Adrenal gland (tissue), 19 donors: ENCODE measurements at regions of chr1 and their contacts with region 1.

Region 1: DNA sequence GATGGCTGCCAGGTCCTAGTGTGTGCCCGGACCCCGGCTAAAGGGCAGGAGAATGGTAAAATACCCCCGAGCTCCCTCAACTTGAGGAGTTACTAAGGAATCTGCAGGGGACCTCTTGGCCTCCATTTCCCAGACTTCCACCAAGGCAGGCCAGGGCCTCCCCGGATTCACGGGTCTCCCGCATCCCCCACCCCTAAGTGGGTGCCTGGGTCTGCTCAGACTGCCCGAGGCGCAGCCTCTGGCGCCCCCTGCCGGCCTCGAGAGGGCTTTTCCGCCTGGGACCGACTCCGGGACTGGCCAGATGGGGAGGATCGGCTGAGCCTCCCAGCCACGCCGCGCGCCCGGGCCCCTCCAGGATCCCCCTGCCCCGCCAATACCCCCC is 1.7 kb downstream of the PLEKHG5 start:
- DNase-seq: peak; percentile 65 to 84 (median 75)
- H3K4me3 ChIP-seq: peak overlapping the region in 3 of 4 donors; percentile 10 to 86 (median 64)
- H3K27ac ChIP-seq: no peak overlapping the region
- H3K4me1 ChIP-seq: peaks cover 16 to 48% of the 10 kb centered on the region in 2 donors
- H3K27me3 ChIP-seq: no peaks in the 10 kb centered on the region
- CTCF ChIP-seq: peak; percentile 62 to 95 (median 82)
- POLR2A ChIP-seq: no peak

Region 2: DNA sequence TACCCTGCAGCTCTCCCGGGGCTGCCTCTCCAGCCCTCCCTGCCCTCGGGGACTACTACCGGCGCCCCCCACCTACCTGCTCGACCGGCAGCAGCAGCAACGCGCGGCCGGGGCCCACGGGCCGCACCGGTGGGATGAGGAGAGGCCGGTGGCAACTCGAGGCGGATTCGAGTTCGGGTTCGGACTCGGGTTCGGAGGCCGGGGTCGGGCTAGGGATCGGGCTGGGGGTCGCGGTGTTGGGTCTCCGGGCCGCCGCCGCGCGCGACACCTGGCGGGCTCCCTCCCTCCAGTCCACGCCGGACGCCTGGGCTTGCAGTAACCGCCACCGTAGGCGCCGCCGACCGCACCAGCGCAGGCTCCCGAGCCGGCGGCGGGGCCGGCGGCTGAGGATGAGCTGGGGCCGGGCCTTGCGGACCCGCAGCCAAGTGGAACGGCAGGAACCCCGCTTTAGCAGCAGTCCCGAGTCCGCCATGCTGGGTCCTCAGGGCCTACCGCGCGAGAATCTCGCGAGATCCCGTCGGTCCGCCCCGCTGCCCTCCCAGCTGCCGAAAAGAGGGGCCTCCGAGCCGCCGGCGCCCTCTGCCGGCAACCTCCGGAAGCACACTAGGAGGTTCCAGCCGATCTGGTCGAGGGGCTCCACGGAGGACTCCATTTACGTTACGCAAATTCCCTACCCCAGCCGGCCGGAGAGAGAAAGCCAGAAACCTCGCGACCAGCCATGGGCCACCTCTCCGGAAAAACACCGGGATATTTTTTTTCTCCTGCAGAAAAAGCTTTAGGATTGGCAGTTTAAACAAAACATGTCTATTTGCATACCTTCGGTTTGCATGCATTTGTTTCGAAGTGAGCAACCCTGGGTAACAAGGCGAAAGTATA is 64.5 kb after region 1 on chr1 and contains the start of gene NOL9:
- intact Hi-C with region 1: loop called in 1 of 2 experiments (anchors 5 kb)
- DNase-seq: peak; percentile 92 to 96 (median 94)
- H3K4me3 ChIP-seq: peak within 1 kb of the TSS; percentile 10 to 99 (median 78)
- H3K27ac ChIP-seq: peak within 1 kb of the TSS in 4 of 5 donors; percentile 41 to 87 (median 60)
- H3K4me1 ChIP-seq: peaks cover 7 to 22% of the 10 kb centered on the region in 2 donors
- H3K27me3 ChIP-seq: no peaks in the 10 kb centered on the region
- CTCF ChIP-seq: peak; percentile 89 to 97 (median 94)
- POLR2A ChIP-seq: peak; percentile 6 to 47
- total RNA-seq, gene NOL9: 10.3 to 39.7 (median 24.7) TPM

Region 3: DNA sequence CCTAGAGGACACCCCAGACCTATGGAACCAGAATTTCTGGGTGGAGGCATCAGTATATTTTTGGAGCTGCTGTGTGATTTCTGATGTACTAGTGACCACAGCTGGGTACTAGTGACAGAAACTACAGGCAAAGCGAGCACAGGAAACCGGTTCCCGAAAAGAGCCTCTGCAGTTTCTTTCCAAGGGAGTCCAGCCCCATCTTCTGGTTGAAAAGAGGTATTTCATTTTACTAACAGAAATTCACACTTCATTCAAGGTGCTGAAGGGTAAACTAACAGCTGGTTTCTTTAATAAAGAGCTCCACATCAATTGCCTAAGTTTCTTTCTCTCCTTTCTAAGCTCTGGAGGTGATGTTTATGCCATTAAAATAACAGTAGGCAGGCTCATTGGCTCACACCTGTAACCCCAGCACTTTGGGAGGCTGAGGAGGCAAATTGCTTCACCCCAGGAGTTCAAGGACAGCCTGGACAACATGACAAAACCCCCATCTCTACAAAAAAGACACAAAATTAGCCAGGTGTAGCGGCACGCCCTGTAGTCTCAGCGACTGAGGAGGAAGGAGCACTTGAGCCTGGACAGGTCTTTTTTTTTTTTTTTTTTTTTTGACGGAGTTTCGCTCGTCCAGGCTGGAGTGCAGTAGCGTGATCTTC is 156.8 kb after region 1 on chr1:
- intact Hi-C with region 1: loop called (anchors 10 kb)
- DNase-seq: peak in 3 of 7 donors; percentile 38 to 50 (median 44)
- H3K4me3 ChIP-seq: no peak overlapping the region
- H3K27ac ChIP-seq: no peak overlapping the region
- H3K4me1 ChIP-seq: no peaks in the 10 kb centered on the region
- H3K27me3 ChIP-seq: no peaks in the 10 kb centered on the region
- CTCF ChIP-seq: peak; percentile 52 to 74 (median 67)
- POLR2A ChIP-seq: no peak